ENCODE measurements at regions of chr13 and their contacts with region 1.

Region 1: DNA sequence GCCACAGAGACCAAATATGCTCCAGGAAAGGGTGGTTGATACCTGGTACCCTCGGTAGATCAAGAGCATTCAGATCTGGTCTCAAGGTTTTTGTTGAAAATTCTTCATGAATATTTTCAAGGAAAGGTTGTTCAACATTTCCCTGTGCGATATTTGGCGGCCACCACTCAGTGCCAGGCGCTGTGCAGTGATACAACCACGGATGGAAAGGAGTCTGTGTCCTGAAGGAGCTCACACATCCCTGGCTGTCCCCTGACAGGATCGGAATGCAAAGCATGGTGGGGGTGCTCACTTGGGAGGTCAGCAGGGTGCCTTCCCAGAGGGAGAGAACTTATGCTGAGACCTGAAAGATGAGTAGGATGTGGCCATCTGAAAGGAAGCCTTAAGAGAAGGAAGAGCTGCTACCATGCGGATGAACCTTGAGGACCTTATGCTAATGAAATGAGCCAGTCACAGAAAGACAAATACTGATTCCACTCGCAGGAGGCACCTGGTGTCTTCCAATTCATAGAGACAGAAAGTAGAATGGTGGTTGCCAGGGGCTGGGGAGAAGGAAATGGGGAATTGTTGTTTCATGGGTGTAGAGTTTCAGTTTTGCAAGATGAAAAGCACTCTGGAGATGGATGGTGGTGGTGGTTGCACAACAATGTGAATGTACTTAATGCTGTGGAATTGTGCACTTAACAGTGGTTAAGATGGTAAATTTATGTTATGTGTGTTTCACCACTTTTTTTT is 41.6 kb downstream of the HSPH1 start:
- DNase-seq: no peak
- ATAC-seq: no peak
- H3K4me3 ChIP-seq: no peak overlapping the region
- H3K27ac ChIP-seq: no peak overlapping the region
- H3K4me1 ChIP-seq: no peaks in the 10 kb centered on the region
- H3K27me3 ChIP-seq: peaks cover 0 to 22% (median 0%) of the 10 kb centered on the region in 9 donors
- CTCF ChIP-seq: no peak
- POLR2A ChIP-seq: no peak

Region 2: GRCh38 chr13:31629085-31629780 is 509.1 kb after region 1 on chr13:
- intact Hi-C with region 1: loop called in 1 of 10 experiments (anchors 10 kb)
- DNase-seq: peak in 2 of 5 donors; percentile 25 to 44
- ATAC-seq: peak in 3 of 4 donors; percentile 56 to 60 (median 58)
- H3K4me3 ChIP-seq: no peak overlapping the region
- H3K27ac ChIP-seq: no peak overlapping the region
- H3K4me1 ChIP-seq: peaks cover 0 to 25% (median 0%) of the 10 kb centered on the region in 12 donors
- H3K27me3 ChIP-seq: no peaks in the 10 kb centered on the region
- CTCF ChIP-seq: no peak
- POLR2A ChIP-seq: no peak